Activated naive CD4-positive, alpha-beta T cell treated with anti-CD3 and anti-CD28 coated beads for 36 hours (primary cell): ENCODE measurements at regions of chr5 and their contacts with region 1.

Region 1: GRCh38 chr5:91311697-91312501 is 71.2 kb downstream of the ARRDC3 start:
- DNase-seq: peak; percentile 75
- H3K4me3 Mint-ChIP-seq: peak overlapping the region; percentile 48
- H3K27ac Mint-ChIP-seq: peak overlapping the region; percentile 68
- H3K4me1 Mint-ChIP-seq: peaks cover 52% of the 10 kb centered on the region
- H3K27me3 Mint-ChIP-seq: no peaks in the 10 kb centered on the region

Region 2: DNA sequence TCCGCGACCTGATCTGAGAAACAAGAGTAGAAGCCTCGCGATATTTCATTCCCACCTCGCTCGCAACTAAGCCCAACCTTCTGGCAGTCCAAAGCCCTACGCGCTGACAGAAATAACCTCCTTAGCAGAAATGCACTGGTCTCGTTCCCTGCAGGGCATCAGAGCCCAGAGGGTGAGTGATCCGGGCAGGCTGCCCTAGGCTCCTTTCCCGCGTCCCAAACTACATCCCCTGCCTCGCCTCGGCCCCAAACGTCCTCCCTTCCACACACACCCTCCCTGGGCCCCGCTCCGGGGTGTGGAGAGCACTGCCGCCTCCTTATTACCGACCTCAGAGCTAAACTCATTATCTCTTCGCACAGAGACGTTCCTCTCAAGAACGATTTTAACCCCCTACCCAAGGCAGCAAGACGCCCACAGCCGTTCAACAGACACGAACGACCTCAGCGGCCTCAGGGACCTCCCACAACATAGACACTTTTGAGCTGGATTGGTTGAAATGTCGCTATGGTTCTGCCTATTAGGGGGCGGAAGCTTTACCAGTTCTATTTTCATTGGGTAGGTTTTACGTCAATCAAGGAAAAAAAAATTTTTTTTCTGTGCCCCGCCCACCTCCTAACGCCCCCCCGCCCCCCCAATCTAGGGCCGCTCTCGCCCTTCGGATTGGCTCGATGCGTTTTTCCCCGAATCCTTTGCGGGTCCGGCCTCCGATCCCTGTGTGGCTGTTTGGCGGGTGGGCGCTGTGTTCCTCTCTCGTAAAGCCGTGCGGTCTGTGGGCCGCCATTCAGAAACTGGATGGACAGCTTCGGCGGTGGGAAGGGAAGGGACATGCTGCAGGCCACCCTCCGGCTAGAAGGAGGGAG is 902.4 kb before region 1 on chr5 and contains the start of gene CETN3:
- CTCF ChIA-PET with region 1: no interaction called
- intact Hi-C with region 1: loop called (anchors 5 kb)
- DNase-seq: peak; percentile 93
- H3K4me3 Mint-ChIP-seq: no peak within 1 kb of the TSS
- H3K27ac Mint-ChIP-seq: no peak within 1 kb of the TSS
- H3K4me1 Mint-ChIP-seq: peaks cover 15% of the 10 kb centered on the region
- H3K27me3 Mint-ChIP-seq: no peaks in the 10 kb centered on the region
- total RNA-seq, gene CETN3: 41.9 to 45.3 TPM

Region 3: DNA sequence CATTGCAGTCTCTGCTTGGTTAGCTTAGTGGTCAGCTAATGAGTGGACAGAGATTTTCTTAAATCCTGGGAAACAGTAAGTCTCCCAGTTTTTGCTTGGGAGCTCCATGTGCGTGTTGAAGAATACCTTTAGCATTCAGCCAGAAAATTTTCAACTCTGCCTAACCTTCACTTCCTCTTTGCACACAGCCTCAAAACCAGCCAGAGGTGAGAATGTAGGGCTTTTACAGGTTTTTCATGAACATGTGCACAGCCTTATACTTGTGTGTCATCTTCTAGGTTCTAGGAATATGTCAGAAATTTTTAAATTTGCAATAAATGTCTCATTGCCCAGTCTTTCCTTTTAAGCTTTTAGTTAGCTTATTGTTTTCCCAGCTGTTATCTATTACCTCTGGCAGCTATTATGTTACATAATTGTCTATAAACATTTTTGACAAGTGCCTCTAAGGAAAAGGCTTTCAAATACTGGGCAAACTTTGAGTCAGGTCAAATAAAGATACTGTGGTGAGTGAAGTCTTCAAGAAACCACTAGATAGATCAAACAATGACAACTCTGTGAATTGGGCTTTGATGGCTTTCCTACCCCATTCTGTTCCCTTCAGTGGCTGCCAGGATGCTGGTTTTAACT is 740.6 kb before region 1 on chr5:
- CTCF ChIA-PET with region 1: no interaction called
- intact Hi-C with region 1: no loop called
- DNase-seq: no peak
- H3K4me3 Mint-ChIP-seq: no peak overlapping the region
- H3K27ac Mint-ChIP-seq: no peak overlapping the region
- H3K4me1 Mint-ChIP-seq: no peaks in the 10 kb centered on the region
- H3K27me3 Mint-ChIP-seq: peaks cover 25% of the 10 kb centered on the region

Region 4: GRCh38 chr5:90940227-90940995 is 371.5 kb before region 1 on chr5:
- CTCF ChIA-PET with region 1: no interaction called
- intact Hi-C with region 1: loop called (anchors 1 kb)
- DNase-seq: peak; percentile 88
- H3K4me3 Mint-ChIP-seq: no peak overlapping the region
- H3K27ac Mint-ChIP-seq: peak overlapping the region; percentile 73
- H3K4me1 Mint-ChIP-seq: peaks cover 13% of the 10 kb centered on the region
- H3K27me3 Mint-ChIP-seq: no peaks in the 10 kb centered on the region

Region 5: DNA sequence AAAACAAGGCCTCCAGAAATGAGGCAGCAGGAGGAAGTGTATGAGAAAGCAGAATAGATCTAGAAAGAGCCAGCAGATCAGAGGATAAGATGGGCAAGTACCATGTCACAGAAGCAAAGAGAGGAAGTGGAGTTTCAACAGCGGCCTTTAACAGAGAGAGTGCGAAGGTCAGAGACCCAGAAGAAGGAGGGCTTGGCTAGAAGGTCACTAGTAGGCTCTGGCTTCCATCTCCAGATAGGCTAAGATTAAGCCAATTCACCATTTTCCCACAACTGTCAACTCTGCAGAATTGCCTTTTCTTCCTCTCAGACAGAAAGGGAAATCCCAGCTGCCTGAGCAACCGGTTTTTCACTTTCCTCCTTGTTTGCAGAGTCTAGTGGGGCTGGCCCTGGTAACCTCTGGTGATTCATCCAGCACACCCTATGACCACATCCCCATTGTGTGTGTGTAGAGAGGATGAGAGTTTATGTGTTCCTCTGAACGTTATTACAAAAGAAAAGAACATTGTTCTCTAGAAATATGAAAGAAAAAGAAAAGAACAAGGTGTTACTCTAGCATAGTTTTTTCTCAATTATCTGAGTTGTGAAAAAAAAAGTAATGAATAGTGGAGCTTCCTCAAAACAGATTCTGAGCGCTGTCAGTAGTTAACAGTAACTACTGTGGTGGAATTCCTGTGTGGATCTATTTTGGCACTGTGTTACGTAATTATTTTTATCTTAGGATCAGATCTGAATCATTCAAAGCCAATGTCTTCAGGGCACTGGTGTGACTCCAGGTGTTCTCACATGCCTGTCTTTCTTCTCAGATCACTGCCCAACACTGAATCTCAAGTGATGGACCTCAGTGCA is 149.1 kb before region 1 on chr5:
- CTCF ChIA-PET with region 1: no interaction called
- intact Hi-C with region 1: loop called (anchors 1 kb)
- DNase-seq: peak; percentile 89
- H3K4me3 Mint-ChIP-seq: no peak overlapping the region
- H3K27ac Mint-ChIP-seq: peak overlapping the region; percentile 65
- H3K4me1 Mint-ChIP-seq: peaks cover 22% of the 10 kb centered on the region
- H3K27me3 Mint-ChIP-seq: no peaks in the 10 kb centered on the region

Region 6: DNA sequence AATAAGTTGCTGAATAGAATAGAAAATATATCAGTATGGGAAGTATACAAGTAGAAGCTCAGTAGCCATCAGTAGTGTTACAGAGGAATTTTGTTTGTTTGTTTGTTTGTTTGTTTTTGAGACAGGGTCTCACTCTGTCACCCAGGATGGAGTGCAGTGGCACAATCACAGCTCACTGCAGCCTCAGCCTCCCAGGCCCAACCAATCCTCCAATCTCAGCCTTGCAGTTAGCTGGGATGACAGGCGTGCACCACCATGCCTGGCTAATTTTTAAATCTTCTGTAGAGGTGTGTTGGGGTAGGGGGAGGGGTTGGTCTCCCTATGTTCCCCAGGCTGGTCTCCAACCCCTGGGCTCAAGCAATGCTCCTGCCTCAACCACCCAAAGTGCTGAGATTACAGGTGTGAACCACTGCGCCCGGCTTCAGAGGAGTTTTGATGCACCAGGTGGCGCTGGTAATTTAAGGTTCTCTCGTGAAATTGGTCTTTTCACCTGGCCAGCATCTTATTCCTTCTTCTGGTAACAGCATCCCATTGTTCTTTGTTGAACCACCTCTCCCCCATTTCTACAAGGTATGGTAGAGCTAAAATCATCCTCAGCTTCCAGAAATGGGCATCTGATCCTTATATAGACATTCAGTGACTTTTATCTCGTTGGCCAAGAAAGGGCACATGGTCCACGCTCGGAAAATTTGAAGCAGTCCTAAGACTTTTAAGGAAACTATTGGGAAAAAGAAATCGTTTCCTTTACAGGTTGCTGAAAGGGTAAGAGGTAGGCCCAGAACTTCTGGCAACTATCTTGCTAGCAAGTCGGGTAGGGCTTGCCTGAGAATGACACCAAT is 85.8 kb before region 1 on chr5:
- CTCF ChIA-PET with region 1: interaction called, 4 read pairs
- intact Hi-C with region 1: loop called (anchors 2 kb)
- DNase-seq: peak; percentile 80
- H3K4me3 Mint-ChIP-seq: no peak overlapping the region
- H3K27ac Mint-ChIP-seq: no peak overlapping the region
- H3K4me1 Mint-ChIP-seq: peaks cover 4% of the 10 kb centered on the region
- H3K27me3 Mint-ChIP-seq: no peaks in the 10 kb centered on the region

Region 7: GRCh38 chr5:91280362-91281269 is 31.3 kb before region 1 on chr5:
- CTCF ChIA-PET with region 1: interaction called, 3 read pairs
- intact Hi-C with region 1: loop called (anchors 1 kb)
- DNase-seq: peak; percentile 94
- H3K4me3 Mint-ChIP-seq: peak overlapping the region; percentile 73
- H3K27ac Mint-ChIP-seq: peak overlapping the region; percentile 87
- H3K4me1 Mint-ChIP-seq: peaks cover 42% of the 10 kb centered on the region
- H3K27me3 Mint-ChIP-seq: no peaks in the 10 kb centered on the region

Region 8: GRCh38 chr5:91361055-91361701 is 49.3 kb after region 1 on chr5:
- CTCF ChIA-PET with region 1: interaction called, 4 read pairs
- intact Hi-C with region 1: loop called (anchors 1 kb)
- DNase-seq: no peak
- H3K4me3 Mint-ChIP-seq: no peak overlapping the region
- H3K27ac Mint-ChIP-seq: peak overlapping the region; percentile 26
- H3K4me1 Mint-ChIP-seq: peaks cover 10% of the 10 kb centered on the region
- H3K27me3 Mint-ChIP-seq: no peaks in the 10 kb centered on the region